Astrocyte of the cerebellum (primary cell): ENCODE measurements at regions of chr19 and their contacts with region 1.

Region 1: GRCh38 chr19:33849551-33850147 is 53.0 kb downstream of the KCTD15 start:
- DNase-seq: no peak
- H3K4me3 ChIP-seq: no peak overlapping the region
- CTCF ChIP-seq: no peak

Region 2: GRCh38 chr19:33720691-33721682 is 128.7 kb before region 1 on chr19:
- in situ Hi-C with region 1: no loop called
- DNase-seq: no peak
- H3K4me3 ChIP-seq: no peak overlapping the region
- CTCF ChIP-seq: no peak

Region 3: GRCh38 chr19:33795370-33796163 is 54.1 kb before region 1 on chr19:
- in situ Hi-C with region 1: no loop called
- DNase-seq: peak; percentile 60
- H3K4me3 ChIP-seq: peak overlapping the region; percentile 65
- CTCF ChIP-seq: peak; percentile 67

Region 4: DNA sequence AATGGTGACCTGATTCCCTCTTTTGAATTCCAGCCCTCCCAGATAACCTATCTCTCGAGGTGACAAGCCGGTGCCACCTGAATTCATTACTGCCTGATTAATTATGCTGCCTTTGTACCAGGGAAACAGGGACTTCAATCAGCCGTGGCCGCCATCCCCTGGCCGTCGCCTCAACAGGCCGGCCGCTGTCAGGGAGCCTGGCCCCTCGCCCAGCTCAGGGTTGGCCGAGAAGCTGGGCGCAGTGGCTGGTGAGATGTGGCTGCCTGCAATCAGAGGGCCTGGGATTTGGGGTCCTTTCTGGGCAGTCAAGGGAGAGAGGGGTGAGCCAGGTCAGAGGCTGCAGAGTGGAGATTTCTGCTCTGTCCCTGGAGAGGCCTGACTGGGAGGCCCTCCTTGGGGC is 38.2 kb after region 1 on chr19:
- in situ Hi-C with region 1: loop called (anchors 5 kb)
- DNase-seq: no peak
- H3K4me3 ChIP-seq: no peak overlapping the region
- CTCF ChIP-seq: no peak

Region 5: DNA sequence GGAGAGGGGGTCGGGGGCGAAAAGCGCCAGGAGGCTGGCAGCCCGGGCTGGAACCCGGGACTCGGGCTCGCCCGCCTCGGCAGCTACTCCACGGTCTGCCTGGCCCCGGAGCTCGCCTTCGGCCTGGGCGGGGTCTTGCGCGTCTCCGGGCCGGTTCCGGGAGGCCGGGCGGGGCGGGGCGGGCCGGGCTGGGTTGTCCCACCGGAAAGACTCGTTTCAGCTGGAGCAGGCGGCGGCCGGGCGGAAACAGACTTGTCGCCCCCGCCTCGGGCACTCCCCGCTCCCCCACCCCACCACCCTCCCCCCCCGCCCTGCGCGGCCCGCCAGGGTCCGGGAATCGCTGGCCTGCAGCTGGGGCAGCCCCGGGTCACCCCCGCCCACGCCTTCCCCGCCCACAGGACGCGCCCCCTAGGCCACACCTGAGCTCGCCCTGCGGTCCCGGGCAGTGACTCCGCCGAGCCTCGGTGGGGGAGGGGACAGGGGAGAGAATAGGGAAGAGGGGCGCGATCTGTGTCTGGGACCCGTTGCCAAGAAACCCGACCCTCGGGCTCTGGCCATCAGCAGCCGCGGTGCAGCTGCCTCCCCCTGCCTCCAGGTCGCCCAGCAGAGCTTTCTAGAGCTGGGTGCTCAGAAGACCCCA is 56.4 kb after region 1 on chr19:
- in situ Hi-C with region 1: no loop called
- DNase-seq: no peak
- H3K4me3 ChIP-seq: peak overlapping the region; percentile 29
- CTCF ChIP-seq: no peak